Activated CD4-positive, alpha-beta T cell treated with anti-CD3 and anti-CD28 coated beads for 36 hours (primary cell): ENCODE measurements at regions of chr2 and their contacts with region 1.

Region 1: DNA sequence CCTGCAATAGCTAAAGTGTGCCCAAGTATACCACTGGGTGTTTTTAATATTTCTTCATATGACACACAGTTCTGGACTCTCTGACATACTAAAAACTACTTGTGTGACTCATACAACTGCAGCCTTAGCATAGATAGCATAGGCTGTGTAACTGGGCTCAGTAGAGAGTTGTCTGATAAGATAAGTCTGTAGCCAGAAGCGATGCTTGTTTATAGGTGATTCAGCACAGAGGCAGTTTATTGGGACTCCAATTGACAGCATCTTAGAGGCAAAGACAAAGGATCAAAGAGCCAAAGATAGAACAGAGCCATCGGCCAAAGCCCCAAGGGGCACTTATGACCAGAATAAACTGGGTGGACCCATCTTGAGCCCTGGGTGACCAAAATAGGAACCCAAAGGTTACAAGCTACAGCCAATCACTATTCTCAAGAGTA is 42.3 kb downstream of the AAK1 start:
- DNase-seq: no peak
- ATAC-seq: peak; percentile 93
- H3K4me3 Mint-ChIP-seq: no peak overlapping the region
- H3K27ac Mint-ChIP-seq: peak overlapping the region; percentile 82
- H3K4me1 Mint-ChIP-seq: peaks cover 93% of the 10 kb centered on the region
- H3K27me3 Mint-ChIP-seq: no peaks in the 10 kb centered on the region

Region 2: GRCh38 chr2:69581774-69582581 is 19.2 kb before region 1 on chr2:
- CTCF ChIA-PET with region 1: interaction called, 7 read pairs
- POLR2A ChIA-PET with region 1: no interaction called
- intact Hi-C with region 1: loop called in 1 of 2 experiments (anchors 2 kb)
- DNase-seq: peak; percentile 21
- ATAC-seq: no peak
- H3K4me3 Mint-ChIP-seq: peak overlapping the region; percentile 52
- H3K27ac Mint-ChIP-seq: peak overlapping the region; percentile 78
- H3K4me1 Mint-ChIP-seq: peaks cover 90% of the 10 kb centered on the region
- H3K27me3 Mint-ChIP-seq: no peaks in the 10 kb centered on the region

Region 3: DNA sequence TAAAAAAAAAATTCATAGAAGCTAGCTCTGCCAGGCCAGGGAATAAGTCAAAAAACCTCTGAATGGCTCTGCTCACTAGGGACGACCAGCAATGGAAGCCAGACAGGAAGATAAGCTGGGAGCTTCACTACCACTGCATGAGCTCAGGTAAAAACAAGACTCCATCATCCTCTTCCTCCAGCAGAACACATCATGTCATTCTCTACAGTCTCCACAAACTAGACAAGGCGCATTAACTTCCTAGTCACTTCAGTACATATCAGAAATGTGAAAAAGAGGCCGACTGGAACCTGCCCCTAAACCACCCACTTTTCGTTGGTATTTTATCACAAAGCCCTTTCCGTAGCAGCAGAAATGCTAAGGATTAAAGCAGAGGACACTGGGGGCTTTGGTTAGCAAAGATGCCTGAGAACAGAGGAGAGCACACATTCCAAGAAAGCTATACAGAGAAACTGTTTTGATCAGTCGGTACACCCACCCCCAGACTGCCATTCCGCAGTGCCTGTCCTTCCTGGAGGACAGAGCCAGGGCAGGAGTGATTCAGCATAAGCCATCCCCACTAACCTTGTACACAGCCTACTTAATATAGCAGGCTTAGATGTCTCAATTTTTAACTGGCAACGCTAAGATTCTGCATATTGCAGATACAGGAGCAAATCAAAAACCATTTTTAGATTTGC is 11.1 kb before region 1 on chr2:
- CTCF ChIA-PET with region 1: interaction called, 7 read pairs
- POLR2A ChIA-PET with region 1: interaction called, 7 read pairs
- intact Hi-C with region 1: loop called in 1 of 2 experiments (anchors 1 kb)
- DNase-seq: no peak
- ATAC-seq: peak; percentile 50
- H3K4me3 Mint-ChIP-seq: no peak overlapping the region
- H3K27ac Mint-ChIP-seq: peak overlapping the region; percentile 76
- H3K4me1 Mint-ChIP-seq: peaks cover 71% of the 10 kb centered on the region
- H3K27me3 Mint-ChIP-seq: no peaks in the 10 kb centered on the region

Region 4: DNA sequence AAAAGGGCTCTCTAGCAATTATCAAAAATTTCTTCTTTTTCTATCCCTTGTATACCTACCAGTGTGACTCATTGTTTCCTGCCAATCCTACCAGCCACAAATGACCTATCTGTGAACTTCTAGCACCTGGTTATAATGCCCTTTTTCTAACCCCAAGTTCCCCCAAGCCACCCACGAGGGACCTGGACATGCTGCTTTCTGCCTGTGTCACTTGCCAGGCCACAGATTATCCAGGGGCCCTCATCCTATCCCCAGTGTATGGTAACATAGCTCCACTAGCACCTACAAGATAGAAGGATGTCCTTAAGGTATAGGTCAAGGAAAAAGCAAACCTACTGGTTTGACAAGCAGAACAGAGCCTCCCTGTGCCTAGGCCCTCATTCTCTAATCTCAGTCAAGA is 15.6 kb after region 1 on chr2:
- CTCF ChIA-PET with region 1: interaction called, 5 read pairs
- POLR2A ChIA-PET with region 1: interaction called, 3 read pairs
- intact Hi-C with region 1: loop called in 1 of 2 experiments (anchors 2 kb)
- DNase-seq: peak; percentile 65
- ATAC-seq: peak; percentile 30
- H3K4me3 Mint-ChIP-seq: peak overlapping the region; percentile 11
- H3K27ac Mint-ChIP-seq: peak overlapping the region; percentile 73
- H3K4me1 Mint-ChIP-seq: peaks cover 41% of the 10 kb centered on the region
- H3K27me3 Mint-ChIP-seq: no peaks in the 10 kb centered on the region

Region 5: DNA sequence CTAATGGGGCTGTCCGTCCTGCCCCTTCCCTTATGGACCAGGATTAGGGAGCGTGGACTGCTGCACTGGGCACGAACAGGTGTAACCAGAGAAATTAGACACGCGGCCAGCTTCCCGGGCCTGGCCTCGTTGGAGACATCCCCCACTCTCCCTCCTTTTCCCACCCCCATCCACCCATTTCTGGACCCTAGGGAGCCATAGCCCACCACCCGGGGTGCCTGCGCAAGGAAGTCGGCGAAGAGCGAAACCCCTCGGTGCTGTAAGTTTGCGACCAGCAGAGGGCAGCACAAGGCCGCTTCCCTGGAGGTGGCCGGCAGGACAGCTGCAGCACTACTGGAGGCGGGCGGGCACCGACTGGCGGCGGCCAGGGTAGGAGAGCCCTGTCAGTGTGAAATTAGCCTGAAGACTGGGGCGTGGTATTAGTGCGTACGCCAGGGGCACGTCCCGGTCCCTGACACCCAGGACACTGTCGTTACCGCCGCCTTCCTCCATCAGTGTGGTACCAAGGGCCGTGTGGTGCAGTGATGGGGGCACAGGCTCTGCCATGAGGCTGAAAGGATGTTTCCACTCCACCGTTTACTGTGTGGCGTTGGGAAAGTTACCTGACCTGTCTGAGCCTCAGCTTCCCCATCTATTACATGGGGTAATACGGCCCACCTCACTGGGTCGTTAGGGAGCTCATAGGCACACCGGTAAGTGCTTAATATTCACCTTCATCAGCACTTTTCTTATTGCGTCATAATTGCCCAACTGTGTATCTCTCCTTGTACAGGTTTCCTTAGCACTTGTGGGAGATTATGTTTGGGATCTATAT is 1270.4 kb after region 1 on chr2:
- CTCF ChIA-PET with region 1: no interaction called
- POLR2A ChIA-PET with region 1: no interaction called
- intact Hi-C with region 1: no loop called
- DNase-seq: peak; percentile 92
- ATAC-seq: peak; percentile 96
- H3K4me3 Mint-ChIP-seq: no peak overlapping the region
- H3K27ac Mint-ChIP-seq: no peak overlapping the region
- H3K4me1 Mint-ChIP-seq: peaks cover 5% of the 10 kb centered on the region
- H3K27me3 Mint-ChIP-seq: peaks cover 41% of the 10 kb centered on the region